Activated B cell treated with CpG ODN at 0.5 μM for 24 hours (primary cell): ENCODE measurements at regions of chr10 and their contacts with region 1.

Region 1: GRCh38 chr10:17200912-17201793 is at the start of gene TRDMT1:
- DNase-seq: peak; percentile 81
- ATAC-seq: peak; percentile 86
- H3K4me3 Mint-ChIP-seq: peak within 1 kb of the TSS; percentile 98
- H3K27ac Mint-ChIP-seq: peak within 1 kb of the TSS; percentile 94
- H3K4me1 Mint-ChIP-seq: peaks cover 42% of the 10 kb centered on the region
- H3K27me3 Mint-ChIP-seq: no peaks in the 10 kb centered on the region
- CTCF ChIP-seq: no peak
- total RNA-seq, gene TRDMT1: 15.0 and 19.9 TPM in 2 replicates

Region 2: DNA sequence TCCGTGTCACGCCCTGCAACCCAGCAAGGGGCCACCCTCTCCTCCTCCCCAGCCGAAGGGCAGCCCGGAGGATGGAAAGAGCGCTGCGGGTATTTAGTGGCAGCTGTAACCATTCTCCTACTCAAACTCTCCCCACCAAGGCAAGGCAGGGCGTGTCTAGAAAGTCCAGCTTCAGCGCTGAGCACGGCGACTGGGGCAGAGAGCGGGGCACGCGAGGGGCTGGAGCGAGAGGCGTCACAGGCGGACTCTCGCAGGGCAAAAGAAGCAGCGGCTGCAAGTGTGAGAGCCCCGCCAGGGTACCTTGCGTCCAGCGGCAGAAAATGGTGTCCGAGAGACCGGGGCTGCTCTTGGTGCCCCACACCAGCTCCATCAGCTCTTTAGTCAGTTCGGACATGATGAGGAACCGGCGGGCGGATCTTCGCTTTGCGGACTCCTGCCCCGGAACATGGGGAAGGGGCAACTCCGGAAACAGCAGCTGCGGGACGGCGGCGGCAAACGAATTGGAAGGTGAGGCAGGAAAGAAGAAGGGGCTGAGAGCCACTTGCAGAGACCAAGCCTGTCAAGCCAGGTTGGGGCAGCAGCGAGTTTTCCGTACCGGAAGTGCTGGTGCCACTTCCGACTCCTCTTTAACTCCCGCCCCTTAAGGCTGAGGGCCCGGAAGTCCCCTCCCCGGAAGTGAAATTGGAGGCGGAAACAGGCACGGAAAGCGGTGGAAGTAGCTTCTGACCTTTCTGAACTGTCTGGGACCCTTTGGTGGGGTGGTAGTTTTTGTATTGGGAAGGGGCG is 1341.1 kb before region 1 on chr10 and contains the start of gene MINDY3:
- CTCF ChIA-PET with region 1: no interaction called
- POLR2A ChIA-PET with region 1: no interaction called
- intact Hi-C with region 1: loop called (anchors 2 kb)
- DNase-seq: peak; percentile 76
- ATAC-seq: peak; percentile 92
- H3K4me3 Mint-ChIP-seq: peak within 1 kb of the TSS; percentile 99
- H3K27ac Mint-ChIP-seq: peak within 1 kb of the TSS; percentile 92
- H3K4me1 Mint-ChIP-seq: peaks cover 39% of the 10 kb centered on the region
- H3K27me3 Mint-ChIP-seq: peaks cover 16% of the 10 kb centered on the region
- CTCF ChIP-seq: no peak
- total RNA-seq, gene MINDY3: 23.2 and 23.4 TPM in 2 replicates

Region 3: DNA sequence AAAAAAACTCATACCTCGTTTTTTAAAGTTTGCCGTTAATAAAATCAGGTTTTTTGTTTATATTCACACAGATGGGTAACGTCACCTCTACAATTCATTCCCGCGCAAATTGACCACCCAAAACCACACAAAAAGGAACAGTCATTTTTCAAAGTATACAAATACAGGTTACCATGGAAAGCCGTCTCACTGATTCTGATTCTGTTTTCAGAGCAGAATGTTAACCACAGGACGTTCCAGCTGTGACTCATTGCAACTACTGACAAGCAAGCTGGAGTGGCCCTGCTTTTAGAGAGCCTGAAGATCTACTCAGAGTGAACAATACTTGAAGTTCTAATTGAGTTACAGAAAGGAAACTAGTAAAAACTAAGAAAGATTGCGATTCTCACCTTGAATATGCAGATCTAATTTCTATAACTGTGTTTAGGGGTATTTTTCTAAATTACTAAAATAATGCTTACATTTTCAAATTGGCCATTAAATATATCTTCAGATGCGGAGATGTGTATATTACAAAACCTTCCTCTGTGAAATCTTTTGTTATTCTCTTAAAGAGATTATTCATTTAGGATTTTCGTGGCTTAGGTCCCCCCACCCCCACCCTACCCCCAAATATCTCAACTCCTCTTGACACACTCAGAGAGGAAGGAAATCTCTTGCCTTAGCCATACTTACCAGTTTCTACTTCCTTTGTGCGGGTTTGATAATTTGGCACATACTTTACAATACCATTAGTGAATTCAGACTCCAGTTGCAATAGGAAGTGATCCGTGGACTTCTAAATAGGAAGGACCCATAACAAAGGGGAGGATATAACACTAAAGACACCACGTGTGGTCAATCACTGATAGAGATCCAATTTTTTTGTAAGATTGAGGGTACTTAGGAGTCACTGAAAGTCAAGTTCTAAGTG is 177.5 kb before region 1 on chr10:
- CTCF ChIA-PET with region 1: no interaction called
- POLR2A ChIA-PET with region 1: no interaction called
- intact Hi-C with region 1: loop called (anchors 1 kb)
- DNase-seq: no peak
- ATAC-seq: peak; percentile 78
- H3K4me3 Mint-ChIP-seq: peak overlapping the region; percentile 15
- H3K27ac Mint-ChIP-seq: peak overlapping the region; percentile 9
- H3K4me1 Mint-ChIP-seq: peaks cover 32% of the 10 kb centered on the region
- H3K27me3 Mint-ChIP-seq: peaks cover 2% of the 10 kb centered on the region
- CTCF ChIP-seq: no peak

Region 4: GRCh38 chr10:17181758-17182157 is 19.4 kb before region 1 on chr10:
- CTCF ChIA-PET with region 1: no interaction called
- POLR2A ChIA-PET with region 1: interaction called, 10 read pairs
- intact Hi-C with region 1: loop called (anchors 2 kb)
- DNase-seq: no peak
- ATAC-seq: no peak
- H3K4me3 Mint-ChIP-seq: no peak overlapping the region
- H3K27ac Mint-ChIP-seq: no peak overlapping the region
- H3K4me1 Mint-ChIP-seq: peaks cover 6% of the 10 kb centered on the region
- H3K27me3 Mint-ChIP-seq: no peaks in the 10 kb centered on the region
- CTCF ChIP-seq: no peak

Region 5: GRCh38 chr10:17216217-17216900 is 15.2 kb after region 1 on chr10:
- CTCF ChIA-PET with region 1: interaction called, 5 read pairs
- POLR2A ChIA-PET with region 1: interaction called, 14 read pairs
- intact Hi-C with region 1: loop called (anchors 1 kb)
- DNase-seq: no peak
- ATAC-seq: peak; percentile 96
- H3K4me3 Mint-ChIP-seq: peak overlapping the region; percentile 46
- H3K27ac Mint-ChIP-seq: peak overlapping the region; percentile 90
- H3K4me1 Mint-ChIP-seq: peaks cover 24% of the 10 kb centered on the region
- H3K27me3 Mint-ChIP-seq: no peaks in the 10 kb centered on the region
- CTCF ChIP-seq: no peak

Region 6: GRCh38 chr10:17235136-17235535 is 34.0 kb after region 1 on chr10:
- CTCF ChIA-PET with region 1: interaction called, 35 read pairs
- POLR2A ChIA-PET with region 1: interaction called, 251 read pairs
- intact Hi-C with region 1: loop called (anchors 1 kb)
- DNase-seq: no peak
- ATAC-seq: no peak
- H3K4me3 Mint-ChIP-seq: no peak overlapping the region
- H3K27ac Mint-ChIP-seq: no peak overlapping the region
- H3K4me1 Mint-ChIP-seq: peaks cover 33% of the 10 kb centered on the region
- H3K27me3 Mint-ChIP-seq: no peaks in the 10 kb centered on the region
- CTCF ChIP-seq: no peak

Region 7: DNA sequence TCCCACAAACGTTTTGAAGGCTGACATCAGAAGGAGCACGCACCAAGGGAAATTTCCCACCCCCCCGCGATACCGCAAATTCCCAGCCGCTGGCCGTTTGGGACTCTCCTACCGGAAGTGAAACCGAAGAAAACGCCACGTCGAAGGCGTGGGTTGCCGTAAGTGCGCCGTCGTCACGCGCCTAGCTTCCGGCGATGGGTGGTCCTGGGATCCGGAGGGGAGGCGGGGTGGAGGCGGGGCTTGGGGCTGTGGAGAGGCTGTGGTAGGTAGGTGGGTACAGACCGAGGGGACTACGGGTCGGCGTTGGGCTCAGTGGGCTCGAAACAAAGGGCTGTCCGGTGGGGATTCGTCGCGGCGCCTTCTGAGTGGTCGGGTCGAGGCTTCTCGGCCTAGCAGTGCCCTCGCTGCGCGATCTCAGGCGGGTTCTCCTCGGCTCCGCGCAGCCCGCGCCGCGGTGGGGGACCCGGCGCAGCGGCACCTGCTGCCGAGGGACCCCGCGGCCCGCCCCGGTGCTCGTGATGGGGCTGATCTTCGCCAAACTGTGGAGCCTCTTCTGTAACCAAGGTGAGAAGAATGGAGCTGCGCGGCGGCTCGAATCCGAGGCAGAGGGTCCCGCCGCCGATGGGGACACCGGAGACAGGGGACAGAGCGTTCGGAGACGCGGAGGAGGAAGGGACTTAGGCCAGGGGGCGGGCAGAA is 1458.1 kb after region 1 on chr10 and contains the start of gene ARL5B:
- CTCF ChIA-PET with region 1: no interaction called
- POLR2A ChIA-PET with region 1: interaction called, 3 read pairs
- intact Hi-C with region 1: loop called (anchors 1 kb)
- DNase-seq: peak; percentile 94
- ATAC-seq: peak; percentile 97
- H3K4me3 Mint-ChIP-seq: peak within 1 kb of the TSS; percentile 98
- H3K27ac Mint-ChIP-seq: peak within 1 kb of the TSS; percentile 97
- H3K4me1 Mint-ChIP-seq: peaks cover 41% of the 10 kb centered on the region
- H3K27me3 Mint-ChIP-seq: no peaks in the 10 kb centered on the region
- CTCF ChIP-seq: no peak
- total RNA-seq, gene ARL5B: 9.4 and 10.6 TPM in 2 replicates